PC-3 (cell line): ENCODE measurements at regions of chr2 and their contacts with region 1.

Region 1: GRCh38 chr2:53234548-53234903 is 533.1 kb upstream of the CHAC2 start:
- DNase-seq: peak; percentile 42
- ATAC-seq: 0 out of 2 replicates have a peak, but pooled peaks have one; percentile 21
- H3K4me3 ChIP-seq: no peak overlapping the region
- H3K27ac ChIP-seq: no peak overlapping the region
- H3K4me1 ChIP-seq: peaks cover 22% of the 10 kb centered on the region
- H3K27me3 ChIP-seq: no peaks in the 10 kb centered on the region
- CTCF ChIP-seq: no peak

Region 2: DNA sequence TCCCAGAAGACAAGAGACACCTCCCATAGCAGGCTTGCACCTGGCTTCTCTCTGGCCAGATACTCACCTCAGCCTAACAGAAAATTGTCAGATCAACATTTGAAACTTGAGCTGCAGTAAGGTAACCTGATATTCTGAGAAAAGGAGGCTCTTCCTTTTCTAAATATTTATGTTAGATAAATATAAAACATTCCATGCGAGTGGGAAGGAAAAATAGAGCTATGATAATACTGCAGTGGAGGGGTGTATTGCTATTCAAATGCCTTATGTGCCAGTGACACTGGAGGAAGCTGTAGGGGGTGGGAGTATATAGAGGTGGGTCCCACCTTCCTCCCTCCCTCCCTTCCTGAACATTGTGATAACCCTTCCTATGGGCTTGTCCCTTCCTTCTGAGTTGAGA is 17.6 kb after region 1 on chr2:
- CTCF ChIA-PET with region 1: no interaction called
- POLR2A ChIA-PET with region 1: no interaction called
- intact Hi-C with region 1: loop called (anchors 2 kb)
- DNase-seq: peak; percentile 67
- ATAC-seq: peak; percentile 81
- H3K4me3 ChIP-seq: no peak overlapping the region
- H3K27ac ChIP-seq: peak overlapping the region; percentile 39
- H3K4me1 ChIP-seq: peaks cover 12% of the 10 kb centered on the region
- H3K27me3 ChIP-seq: no peaks in the 10 kb centered on the region
- CTCF ChIP-seq: no peak

Region 3: DNA sequence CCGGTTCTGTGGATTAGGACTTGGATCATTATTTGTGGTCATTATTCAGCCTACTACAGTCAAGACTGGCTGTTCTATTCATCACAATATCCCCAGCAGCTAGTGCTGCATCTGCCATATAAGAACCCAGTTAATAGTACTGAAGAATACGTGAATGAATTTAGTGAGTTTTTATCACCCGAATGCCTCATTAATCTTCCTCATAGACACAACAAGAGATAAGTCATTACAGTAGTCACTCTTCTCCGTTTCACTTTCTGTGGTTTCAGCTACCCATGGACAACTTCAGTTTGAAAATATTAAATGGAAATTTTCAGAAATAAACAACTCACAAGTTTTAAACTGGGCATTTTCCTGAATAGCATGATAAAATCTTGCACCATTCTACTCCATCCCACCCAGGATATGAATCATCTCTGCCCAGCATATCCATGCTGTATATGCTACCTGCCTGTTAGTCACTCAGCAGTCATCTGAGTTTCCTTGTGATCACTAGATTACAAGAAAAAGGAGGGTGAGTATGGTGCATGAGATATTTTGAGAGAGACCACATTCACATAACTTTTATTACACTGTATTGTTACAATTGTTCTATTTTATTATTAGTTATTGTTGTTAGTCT is 169.4 kb after region 1 on chr2:
- CTCF ChIA-PET with region 1: no interaction called
- POLR2A ChIA-PET with region 1: no interaction called
- intact Hi-C with region 1: loop called (anchors 10 kb)
- DNase-seq: peak; percentile 94
- ATAC-seq: peak; percentile 95
- H3K4me3 ChIP-seq: peak overlapping the region; percentile 37; the same call in 1 of the 2 replicates
- H3K27ac ChIP-seq: peak overlapping the region; percentile 97
- H3K4me1 ChIP-seq: peaks cover 64% of the 10 kb centered on the region
- H3K27me3 ChIP-seq: no peaks in the 10 kb centered on the region
- CTCF ChIP-seq: no peak

Region 4: GRCh38 chr2:54041135-54041534 is 806.6 kb after region 1 on chr2:
- CTCF ChIA-PET with region 1: no interaction called
- POLR2A ChIA-PET with region 1: no interaction called
- intact Hi-C with region 1: no loop called
- DNase-seq: peak; percentile 41
- ATAC-seq: peak; percentile 18; the same call in 1 of the 2 replicates
- H3K4me3 ChIP-seq: no peak overlapping the region
- H3K27ac ChIP-seq: peak overlapping the region; percentile 22; the same call in 1 of the 2 replicates
- H3K4me1 ChIP-seq: peaks cover 27% of the 10 kb centered on the region
- H3K27me3 ChIP-seq: no peaks in the 10 kb centered on the region
- CTCF ChIP-seq: no peak